Ovary (tissue), 10 donors: ENCODE measurements at regions of chr17 and their contacts with region 1.

Region 1: GRCh38 chr17:75109407-75110233 is at the start of gene ARMC7:
- DNase-seq: peak; percentile 84 to 94 (median 89)
- H3K4me3 ChIP-seq: peak within 1 kb of the TSS; percentile 72
- H3K27ac ChIP-seq: peak within 1 kb of the TSS in 1 of 2 donors; percentile 22
- H3K4me1 ChIP-seq: peaks cover 1% of the 10 kb centered on the region
- H3K27me3 ChIP-seq: no peaks in the 10 kb centered on the region
- CTCF ChIP-seq: no peak
- EP300 ChIP-seq: no peak
- POLR2A ChIP-seq: peak; percentile 32
- total RNA-seq, gene ARMC7: 4.6 to 8.5 (median 5.1) TPM

Region 2: GRCh38 chr17:75006653-75007052 is 103.0 kb before region 1 on chr17:
- intact Hi-C with region 1: no loop called
- DNase-seq: no peak
- H3K4me3 ChIP-seq: no peak overlapping the region
- H3K27ac ChIP-seq: no peak overlapping the region
- H3K4me1 ChIP-seq: no peaks in the 10 kb centered on the region
- H3K27me3 ChIP-seq: no peaks in the 10 kb centered on the region
- CTCF ChIP-seq: no peak
- EP300 ChIP-seq: no peak
- POLR2A ChIP-seq: no peak

Region 3: GRCh38 chr17:75154195-75155106 is 44.8 kb after region 1 on chr17 and contains the start of gene JPT1:
- intact Hi-C with region 1: no loop called
- DNase-seq: peak; percentile 96 to 99 (median 98)
- H3K4me3 ChIP-seq: peak within 1 kb of the TSS; percentile 92
- H3K27ac ChIP-seq: peak within 1 kb of the TSS in 1 of 2 donors; percentile 16
- H3K4me1 ChIP-seq: peaks cover 1% of the 10 kb centered on the region
- H3K27me3 ChIP-seq: no peaks in the 10 kb centered on the region
- CTCF ChIP-seq: peak in 1 of 3 donors; percentile 44
- EP300 ChIP-seq: no peak
- POLR2A ChIP-seq: peak; percentile 99
- total RNA-seq, gene JPT1: 12.9 to 46.4 (median 20.2) TPM

Region 4: GRCh38 chr17:75173526-75173925 is 63.9 kb after region 1 on chr17:
- intact Hi-C with region 1: loop called in 1 of 4 experiments (anchors 10 kb)
- DNase-seq: peak in 1 of 5 donors; percentile 13
- H3K4me3 ChIP-seq: no peak overlapping the region
- H3K27ac ChIP-seq: no peak overlapping the region
- H3K4me1 ChIP-seq: no peaks in the 10 kb centered on the region
- H3K27me3 ChIP-seq: no peaks in the 10 kb centered on the region
- CTCF ChIP-seq: no peak
- EP300 ChIP-seq: no peak
- POLR2A ChIP-seq: no peak

Region 5: DNA sequence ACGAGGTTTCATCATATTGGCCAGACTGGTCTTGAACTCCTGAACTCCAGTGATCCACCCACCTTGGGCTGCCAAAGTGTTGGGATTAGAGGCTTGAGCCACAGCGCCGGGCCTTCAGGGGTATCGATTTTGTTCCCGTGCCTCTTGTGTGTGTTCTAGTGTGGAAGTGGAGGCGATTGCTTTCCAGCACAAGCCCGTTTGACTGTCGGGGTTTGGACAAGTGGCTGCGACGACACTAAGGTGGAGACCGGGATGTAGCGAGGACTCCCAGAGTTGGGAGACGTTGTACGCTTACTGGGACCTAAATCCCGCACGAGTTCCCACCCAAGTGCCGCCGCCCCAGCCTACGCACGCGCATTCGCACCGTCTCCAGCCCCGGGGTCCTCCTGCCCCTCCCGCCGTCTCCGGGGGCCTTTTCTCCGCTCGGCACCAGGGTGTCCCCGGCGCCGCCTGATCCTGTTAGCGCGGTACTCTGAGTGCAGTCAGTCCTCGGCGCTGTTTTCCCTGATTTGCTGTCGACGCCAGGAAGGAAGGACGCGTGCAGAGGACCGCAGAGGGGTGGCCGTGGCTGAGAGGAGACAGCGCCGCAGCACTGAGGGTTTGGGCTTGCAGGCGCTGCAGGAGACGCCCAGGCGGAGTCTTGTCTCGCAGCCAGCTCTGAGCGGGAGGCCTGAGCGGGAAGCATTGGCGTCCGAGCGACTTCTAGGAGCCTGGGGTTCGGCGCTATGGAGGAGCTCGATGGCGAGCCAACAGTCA is 95.6 kb after region 1 on chr17 and contains the start of gene NUP85:
- intact Hi-C with region 1: loop called in 2 of 4 experiments (anchors 2 to 10 kb)
- DNase-seq: peak; percentile 94 to 96 (median 95)
- H3K4me3 ChIP-seq: peak within 1 kb of the TSS; percentile 87
- H3K27ac ChIP-seq: peak within 1 kb of the TSS; percentile 76 to 95
- H3K4me1 ChIP-seq: peaks cover 4% of the 10 kb centered on the region
- H3K27me3 ChIP-seq: no peaks in the 10 kb centered on the region
- CTCF ChIP-seq: peak in 1 of 3 donors; percentile 28
- EP300 ChIP-seq: no peak
- POLR2A ChIP-seq: peak; percentile 83
- total RNA-seq, gene NUP85: 23.4 to 82.2 (median 55.1) TPM